Spleen (tissue), 13 donors: ENCODE measurements at regions of chr16 and their contacts with region 1.

Region 1: GRCh38 chr16:72093448-72094265 is at the starts of genes DHX38 and TXNL4B:
- DNase-seq: peak; percentile 96
- H3K4me3 ChIP-seq: peak within 1 kb of the TSS; percentile 60 to 93 (median 86)
- H3K27ac ChIP-seq: peak within 1 kb of the TSS; percentile 89 to 97 (median 92)
- H3K4me1 ChIP-seq: peaks cover 27 to 58% (median 40%) of the 10 kb centered on the region in 6 donors
- H3K27me3 ChIP-seq: no peaks in the 10 kb centered on the region
- CTCF ChIP-seq: peak in 6 of 11 experiments; percentile 8 to 50 (median 29)
- POLR2A ChIP-seq: peak in 2 of 3 donors; percentile 33 to 60
- total RNA-seq, gene DHX38: 60.3 to 89.3 (median 73.0) TPM
- total RNA-seq, gene TXNL4B: 12.2 to 21.3 (median 16.0) TPM

Region 2: GRCh38 chr16:71883849-71884638 is 209.6 kb before region 1 on chr16 and contains the start of gene ZNF821:
- intact Hi-C with region 1: no loop called
- DNase-seq: peak; percentile 95
- H3K4me3 ChIP-seq: peak within 1 kb of the TSS; percentile 64 to 99 (median 90)
- H3K27ac ChIP-seq: peak within 1 kb of the TSS; percentile 78 to 97 (median 92)
- H3K4me1 ChIP-seq: peaks cover 31 to 56% (median 48%) of the 10 kb centered on the region in 6 donors
- H3K27me3 ChIP-seq: no peaks in the 10 kb centered on the region
- CTCF ChIP-seq: peak in 5 of 11 experiments; percentile 19 to 58 (median 37)
- POLR2A ChIP-seq: peak in 1 of 3 donors; percentile 7
- total RNA-seq, gene ZNF821: 7.9 to 15.9 (median 10.6) TPM

Region 3: DNA sequence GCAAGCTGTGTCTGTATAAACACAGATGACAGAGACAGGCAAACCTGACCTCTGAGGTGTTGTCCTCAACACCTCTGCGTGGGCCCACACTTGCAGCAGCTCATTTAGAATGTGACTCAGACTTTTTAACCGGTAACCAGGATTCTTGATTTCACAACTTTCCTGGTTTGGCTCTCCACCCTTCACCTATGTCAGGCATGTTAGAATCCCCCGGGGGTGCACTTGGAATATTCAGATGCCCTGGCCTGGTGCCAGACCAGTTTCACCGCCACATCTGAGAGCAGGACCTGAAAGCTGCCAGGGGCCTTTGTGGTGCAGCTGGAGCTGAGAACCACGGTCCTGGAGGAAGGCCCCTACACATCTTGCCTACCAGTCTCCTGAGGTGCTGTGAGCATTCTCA is 80.3 kb before region 1 on chr16:
- intact Hi-C with region 1: loop called (anchors 5 kb)
- DNase-seq: no peak
- H3K4me3 ChIP-seq: peak overlapping the region in 3 of 8 donors; percentile 0 to 14 (median 9)
- H3K27ac ChIP-seq: peak overlapping the region; percentile 29 to 77 (median 70)
- H3K4me1 ChIP-seq: peaks cover 2 to 44% (median 22%) of the 10 kb centered on the region in 6 donors
- H3K27me3 ChIP-seq: no peaks in the 10 kb centered on the region
- CTCF ChIP-seq: no peak
- POLR2A ChIP-seq: no peak